ENCODE measurements at regions of chr11 and their contacts with region 1.

Region 1: DNA sequence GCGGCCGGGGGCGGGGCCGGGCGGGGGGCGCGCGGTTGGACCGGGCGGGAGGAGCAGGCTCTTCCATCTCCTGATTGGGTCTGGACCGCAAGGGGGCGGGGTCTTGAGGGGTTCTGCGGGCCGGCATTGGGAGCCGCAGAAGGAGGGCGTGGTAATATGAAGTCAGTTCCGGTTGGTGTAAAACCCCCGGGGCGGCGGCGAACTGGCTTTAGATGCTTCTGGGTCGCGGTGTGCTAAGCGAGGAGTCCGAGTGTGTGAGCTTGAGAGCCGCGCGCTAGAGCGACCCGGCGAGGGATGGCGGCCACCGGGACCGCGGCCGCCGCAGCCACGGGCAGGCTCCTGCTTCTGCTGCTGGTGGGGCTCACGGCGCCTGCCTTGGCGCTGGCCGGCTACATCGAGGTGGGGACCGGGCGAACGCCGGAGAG is at the start of gene APLP2:
- DNase-seq: peak; percentile 100
- H3K4me3 ChIP-seq: peak within 1 kb of the TSS; percentile 99
- H3K4me3 Mint-ChIP-seq: peak within 1 kb of the TSS; percentile 90
- H3K27ac Mint-ChIP-seq: peak within 1 kb of the TSS; percentile 91
- H3K4me1 ChIP-seq: peaks cover 41% of the 10 kb centered on the region
- H3K4me1 Mint-ChIP-seq: peaks cover 27% of the 10 kb centered on the region
- H3K27me3 ChIP-seq: no peaks in the 10 kb centered on the region
- H3K27me3 Mint-ChIP-seq: no peaks in the 10 kb centered on the region
- CTCF ChIP-seq: no peak
- total RNA-seq, gene APLP2: 1,761 and 2,076 TPM in 2 replicates

Region 2: GRCh38 chr11:129922674-129923073 is 147.0 kb before region 1 on chr11:
- CTCF ChIA-PET with region 1: interaction called, 5 read pairs
- POLR2A ChIA-PET with region 1: no interaction called
- intact Hi-C with region 1: loop called (anchors 1 kb)
- DNase-seq: peak in 1 of 2 experiments; percentile 29
- H3K4me3 ChIP-seq: no peak overlapping the region
- H3K4me3 Mint-ChIP-seq: no peak overlapping the region
- H3K27ac Mint-ChIP-seq: no peak overlapping the region
- H3K4me1 ChIP-seq: peaks cover 5% of the 10 kb centered on the region
- H3K4me1 Mint-ChIP-seq: peaks cover 6% of the 10 kb centered on the region
- H3K27me3 ChIP-seq: no peaks in the 10 kb centered on the region
- H3K27me3 Mint-ChIP-seq: no peaks in the 10 kb centered on the region
- CTCF ChIP-seq: peak in 1 of 2 experiments; percentile 35

Region 3: DNA sequence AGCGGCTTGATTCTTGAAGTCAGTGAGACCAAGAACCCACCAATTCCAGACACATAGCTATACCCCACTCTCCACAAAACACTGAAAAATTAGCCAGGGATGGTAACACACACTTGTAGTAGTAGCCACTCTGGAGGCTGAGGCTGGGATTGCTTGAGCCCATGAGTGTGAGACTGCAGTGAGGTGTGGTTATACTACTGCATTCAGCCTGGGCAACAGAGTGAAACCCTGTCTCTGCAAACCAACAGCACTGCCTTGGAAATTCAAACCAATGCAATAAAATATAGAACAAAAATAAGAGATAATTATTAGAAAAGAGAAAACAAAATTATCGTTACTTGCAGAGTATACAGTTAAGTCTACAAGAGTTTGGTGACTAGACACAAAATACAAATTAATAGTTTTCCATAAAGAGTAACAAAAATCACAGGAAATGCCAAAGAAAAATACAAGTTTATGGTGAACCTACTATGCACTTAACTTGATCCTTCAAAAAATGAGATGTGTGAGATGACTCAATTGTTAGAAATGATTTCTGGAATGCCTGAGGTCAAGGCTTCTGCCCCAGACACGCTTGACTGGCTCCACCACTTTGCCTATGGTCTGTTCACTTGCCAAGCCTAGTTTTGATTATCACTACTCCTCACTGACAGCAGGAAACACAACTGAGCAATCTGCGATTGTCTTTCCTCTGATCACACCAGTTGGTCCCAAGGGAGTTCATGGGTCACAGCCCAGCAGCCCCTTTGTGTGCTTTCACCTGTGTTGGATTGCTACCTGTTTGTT is 46.7 kb before region 1 on chr11:
- CTCF ChIA-PET with region 1: interaction called, 3 read pairs
- POLR2A ChIA-PET with region 1: interaction called, 9 read pairs
- intact Hi-C with region 1: loop called (anchors 1 kb)
- DNase-seq: peak; percentile 88 to 89
- H3K4me3 ChIP-seq: no peak overlapping the region
- H3K4me3 Mint-ChIP-seq: peak overlapping the region; percentile 24
- H3K27ac Mint-ChIP-seq: peak overlapping the region; percentile 71
- H3K4me1 ChIP-seq: peaks cover 59% of the 10 kb centered on the region
- H3K4me1 Mint-ChIP-seq: peaks cover 47% of the 10 kb centered on the region
- H3K27me3 ChIP-seq: no peaks in the 10 kb centered on the region
- H3K27me3 Mint-ChIP-seq: no peaks in the 10 kb centered on the region
- CTCF ChIP-seq: no peak

Region 4: GRCh38 chr11:130049328-130049771 is 20.3 kb before region 1 on chr11:
- CTCF ChIA-PET with region 1: no interaction called
- POLR2A ChIA-PET with region 1: no interaction called
- intact Hi-C with region 1: loop called (anchors 1 kb)
- DNase-seq: no peak
- H3K4me3 ChIP-seq: no peak overlapping the region
- H3K4me3 Mint-ChIP-seq: no peak overlapping the region
- H3K27ac Mint-ChIP-seq: no peak overlapping the region
- H3K4me1 ChIP-seq: 0 out of 2 replicates have a peak, but pooled peaks cover 3% of the 10 kb centered on the region
- H3K4me1 Mint-ChIP-seq: no peaks in the 10 kb centered on the region
- H3K27me3 ChIP-seq: no peaks in the 10 kb centered on the region
- H3K27me3 Mint-ChIP-seq: no peaks in the 10 kb centered on the region
- CTCF ChIP-seq: no peak

Region 5: DNA sequence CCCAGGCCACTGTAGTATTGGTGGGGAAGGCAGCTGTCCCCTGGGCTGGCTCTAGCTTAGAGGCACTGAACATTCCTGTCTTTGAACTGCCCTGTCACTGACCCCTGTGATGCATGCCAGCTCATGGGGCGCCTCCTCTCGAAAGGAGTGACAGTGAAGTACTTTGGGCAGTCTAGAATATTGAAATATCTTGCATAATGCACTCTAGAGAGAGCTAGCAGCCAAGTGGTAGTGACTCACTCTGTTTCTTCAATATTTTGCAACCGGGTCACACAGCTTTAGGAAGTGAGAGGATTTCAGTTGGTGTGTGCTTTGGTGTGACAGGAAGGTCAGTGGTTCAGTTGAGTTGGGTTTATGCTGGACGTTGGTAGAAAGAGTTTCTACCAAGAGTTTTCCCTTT is 54.4 kb after region 1 on chr11:
- CTCF ChIA-PET with region 1: no interaction called
- POLR2A ChIA-PET with region 1: interaction called, 15 read pairs
- intact Hi-C with region 1: no loop called
- DNase-seq: peak; percentile 66 to 67
- H3K4me3 ChIP-seq: no peak overlapping the region
- H3K4me3 Mint-ChIP-seq: no peak overlapping the region
- H3K27ac Mint-ChIP-seq: peak overlapping the region; percentile 82
- H3K4me1 ChIP-seq: peaks cover 60% of the 10 kb centered on the region
- H3K4me1 Mint-ChIP-seq: peaks cover 58% of the 10 kb centered on the region
- H3K27me3 ChIP-seq: no peaks in the 10 kb centered on the region
- H3K27me3 Mint-ChIP-seq: no peaks in the 10 kb centered on the region
- CTCF ChIP-seq: no peak